Caco-2 (cell line): ENCODE measurements at regions of chrX and their contacts with region 1.

Region 1: GRCh38 chrX:373637-374471 is 12.9 kb downstream of the PPP2R3B start:
- DNase-seq: peak; percentile 67 to 78
- H3K4me3 ChIP-seq: peak overlapping the region; percentile 77
- H3K4me3 Mint-ChIP-seq: peak overlapping the region; percentile 96
- H3K27ac Mint-ChIP-seq: peak overlapping the region; percentile 90
- H3K4me1 ChIP-seq: peaks cover 9% of the 10 kb centered on the region
- H3K4me1 Mint-ChIP-seq: peaks cover 6% of the 10 kb centered on the region
- H3K27me3 ChIP-seq: no peaks in the 10 kb centered on the region
- H3K27me3 Mint-ChIP-seq: no peaks in the 10 kb centered on the region
- CTCF ChIP-seq: peak in 1 of 2 experiments; percentile 4

Region 2: GRCh38 chrX:386768-387575 is 13.1 kb after region 1 on chrX and contains the start of gene PPP2R3B:
- CTCF ChIA-PET with region 1: no interaction called
- POLR2A ChIA-PET with region 1: no interaction called
- intact Hi-C with region 1: loop called (anchors 2 kb)
- DNase-seq: peak; percentile 99
- H3K4me3 ChIP-seq: peak within 1 kb of the TSS; percentile 99
- H3K4me3 Mint-ChIP-seq: peak within 1 kb of the TSS; percentile 96
- H3K27ac Mint-ChIP-seq: peak within 1 kb of the TSS; percentile 100
- H3K4me1 ChIP-seq: no peaks in the 10 kb centered on the region
- H3K4me1 Mint-ChIP-seq: no peaks in the 10 kb centered on the region
- H3K27me3 ChIP-seq: no peaks in the 10 kb centered on the region
- H3K27me3 Mint-ChIP-seq: no peaks in the 10 kb centered on the region
- CTCF ChIP-seq: no peak
- total RNA-seq, gene PPP2R3B: 57.9 and 71.3 TPM in 2 replicates